Activated B cell treated with CpG ODN at 0.5 μM for 24 hours (primary cell): ENCODE measurements at regions of chr1 and their contacts with region 1.

Region 1: DNA sequence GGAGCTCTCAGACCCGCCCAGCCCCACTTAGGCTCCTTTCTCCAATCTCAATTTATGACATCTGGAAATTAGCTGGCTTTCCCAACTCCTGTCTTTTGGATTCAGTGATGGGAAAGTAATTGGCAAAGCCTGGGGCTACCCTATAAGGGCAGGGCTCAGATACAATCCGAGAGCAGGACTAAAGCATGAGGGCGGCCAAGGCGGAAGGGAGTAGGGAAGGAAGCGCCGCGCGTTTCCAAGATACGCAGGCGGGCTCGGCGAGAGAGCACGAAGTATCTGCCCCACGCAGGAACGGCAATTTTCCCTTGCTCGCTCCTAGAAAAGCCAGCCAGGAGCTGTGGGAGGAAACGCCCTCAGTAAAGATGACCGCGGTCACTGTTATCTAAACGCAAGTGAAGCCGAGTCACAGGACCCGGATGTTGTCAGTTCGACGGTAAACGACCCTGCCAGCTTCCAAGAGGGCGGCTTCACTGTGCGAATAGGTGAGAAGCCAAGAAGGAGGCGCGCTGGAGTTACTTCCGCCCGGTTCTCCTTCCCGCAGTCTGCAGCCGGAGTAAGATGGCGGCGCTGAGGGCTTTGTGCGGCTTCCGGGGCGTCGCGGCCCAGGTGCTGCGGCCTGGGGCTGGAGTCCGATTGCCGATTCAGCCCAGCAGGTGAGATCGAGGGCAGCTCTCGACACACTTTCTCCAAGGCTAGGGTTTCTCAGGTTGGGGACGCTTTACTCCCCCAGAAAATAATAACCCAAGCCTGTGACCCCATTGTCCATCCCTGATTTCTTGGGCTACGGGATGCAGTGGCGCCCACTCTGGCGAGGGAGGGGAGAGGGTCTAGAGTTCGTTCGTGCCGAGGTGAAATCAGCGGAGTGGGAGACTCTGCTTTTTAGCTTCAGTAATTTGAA is at the start of gene NDUFS2:
- DNase-seq: peak; percentile 82
- ATAC-seq: peak; percentile 99
- H3K4me3 Mint-ChIP-seq: peak within 1 kb of the TSS; percentile 94
- H3K27ac Mint-ChIP-seq: peak within 1 kb of the TSS; percentile 94
- H3K4me1 Mint-ChIP-seq: peaks cover 38% of the 10 kb centered on the region
- H3K27me3 Mint-ChIP-seq: no peaks in the 10 kb centered on the region
- CTCF ChIP-seq: no peak
- total RNA-seq, gene NDUFS2: 69.1 and 73.9 TPM in 2 replicates

Region 2: DNA sequence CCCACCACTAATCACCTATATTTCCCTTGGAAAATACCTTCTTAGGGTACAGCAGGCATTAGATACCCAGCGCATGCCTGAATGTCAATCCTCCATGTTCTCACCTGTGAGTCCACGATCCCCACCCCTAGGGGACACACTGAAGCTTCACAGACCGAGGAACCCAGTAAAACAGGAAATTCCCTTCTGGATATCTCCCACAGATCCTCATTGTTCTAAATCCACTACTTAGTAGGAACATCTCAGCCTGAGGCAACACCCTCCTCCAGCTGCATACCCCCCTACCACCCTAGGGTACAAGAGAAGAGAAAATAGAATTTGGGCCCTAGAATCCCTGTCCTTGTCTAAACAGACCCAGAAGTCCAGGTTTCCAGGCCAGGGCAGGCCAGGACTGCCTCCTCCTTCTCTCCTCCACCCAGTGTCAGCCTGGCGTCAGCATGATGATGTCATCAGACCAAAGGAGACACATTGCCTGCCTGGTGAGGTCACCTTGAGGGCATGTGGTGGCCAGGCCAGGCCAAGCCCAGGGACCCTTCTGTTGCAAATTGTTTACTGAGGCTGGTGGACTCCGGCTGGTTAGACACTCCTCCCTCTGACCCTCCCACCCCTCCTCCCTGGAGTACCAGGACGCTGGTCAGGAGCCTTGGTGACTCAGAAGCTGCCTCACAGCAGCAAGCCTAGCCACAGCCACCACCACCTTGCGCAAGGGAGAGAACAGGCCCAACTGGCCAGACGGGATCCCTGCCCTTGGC is 118.9 kb before region 1 on chr1:
- CTCF ChIA-PET with region 1: no interaction called
- POLR2A ChIA-PET with region 1: no interaction called
- intact Hi-C with region 1: no loop called
- DNase-seq: no peak
- ATAC-seq: no peak
- H3K4me3 Mint-ChIP-seq: no peak overlapping the region
- H3K27ac Mint-ChIP-seq: no peak overlapping the region
- H3K4me1 Mint-ChIP-seq: no peaks in the 10 kb centered on the region
- H3K27me3 Mint-ChIP-seq: peaks cover 4% of the 10 kb centered on the region
- CTCF ChIP-seq: no peak

Region 3: GRCh38 chr1:161153679-161154426 is 48.2 kb before region 1 on chr1 and contains the start of gene UFC1:
- CTCF ChIA-PET with region 1: no interaction called
- POLR2A ChIA-PET with region 1: interaction called, 13 read pairs
- intact Hi-C with region 1: loop called (anchors 1 kb)
- DNase-seq: peak; percentile 66
- ATAC-seq: peak; percentile 94
- H3K4me3 Mint-ChIP-seq: peak within 1 kb of the TSS; percentile 99
- H3K27ac Mint-ChIP-seq: peak within 1 kb of the TSS; percentile 100
- H3K4me1 Mint-ChIP-seq: peaks cover 21% of the 10 kb centered on the region
- H3K27me3 Mint-ChIP-seq: no peaks in the 10 kb centered on the region
- CTCF ChIP-seq: no peak
- total RNA-seq, gene UFC1: 107 and 127 TPM in 2 replicates

Region 4: GRCh38 chr1:161165742-161166668 is 36.1 kb before region 1 on chr1 and contains the start of gene PPOX:
- CTCF ChIA-PET with region 1: interaction called, 21 read pairs
- POLR2A ChIA-PET with region 1: interaction called, 30 read pairs
- intact Hi-C with region 1: loop called (anchors 1 kb)
- DNase-seq: peak; percentile 82
- ATAC-seq: peak; percentile 94
- H3K4me3 Mint-ChIP-seq: peak within 1 kb of the TSS; percentile 88
- H3K27ac Mint-ChIP-seq: peak within 1 kb of the TSS; percentile 98
- H3K4me1 Mint-ChIP-seq: peaks cover 48% of the 10 kb centered on the region
- H3K27me3 Mint-ChIP-seq: no peaks in the 10 kb centered on the region
- CTCF ChIP-seq: no peak
- total RNA-seq, gene PPOX: 31.5 and 40.7 TPM in 2 replicates

Region 5: GRCh38 chr1:161185282-161185682 is 16.8 kb before region 1 on chr1:
- CTCF ChIA-PET with region 1: interaction called, 6 read pairs
- POLR2A ChIA-PET with region 1: interaction called, 40 read pairs
- intact Hi-C with region 1: loop called (anchors 1 kb)
- DNase-seq: peak; percentile 41
- ATAC-seq: peak; percentile 66
- H3K4me3 Mint-ChIP-seq: peak overlapping the region; percentile 77
- H3K27ac Mint-ChIP-seq: peak overlapping the region; percentile 93
- H3K4me1 Mint-ChIP-seq: peaks cover 85% of the 10 kb centered on the region
- H3K27me3 Mint-ChIP-seq: no peaks in the 10 kb centered on the region
- CTCF ChIP-seq: no peak

Region 6: DNA sequence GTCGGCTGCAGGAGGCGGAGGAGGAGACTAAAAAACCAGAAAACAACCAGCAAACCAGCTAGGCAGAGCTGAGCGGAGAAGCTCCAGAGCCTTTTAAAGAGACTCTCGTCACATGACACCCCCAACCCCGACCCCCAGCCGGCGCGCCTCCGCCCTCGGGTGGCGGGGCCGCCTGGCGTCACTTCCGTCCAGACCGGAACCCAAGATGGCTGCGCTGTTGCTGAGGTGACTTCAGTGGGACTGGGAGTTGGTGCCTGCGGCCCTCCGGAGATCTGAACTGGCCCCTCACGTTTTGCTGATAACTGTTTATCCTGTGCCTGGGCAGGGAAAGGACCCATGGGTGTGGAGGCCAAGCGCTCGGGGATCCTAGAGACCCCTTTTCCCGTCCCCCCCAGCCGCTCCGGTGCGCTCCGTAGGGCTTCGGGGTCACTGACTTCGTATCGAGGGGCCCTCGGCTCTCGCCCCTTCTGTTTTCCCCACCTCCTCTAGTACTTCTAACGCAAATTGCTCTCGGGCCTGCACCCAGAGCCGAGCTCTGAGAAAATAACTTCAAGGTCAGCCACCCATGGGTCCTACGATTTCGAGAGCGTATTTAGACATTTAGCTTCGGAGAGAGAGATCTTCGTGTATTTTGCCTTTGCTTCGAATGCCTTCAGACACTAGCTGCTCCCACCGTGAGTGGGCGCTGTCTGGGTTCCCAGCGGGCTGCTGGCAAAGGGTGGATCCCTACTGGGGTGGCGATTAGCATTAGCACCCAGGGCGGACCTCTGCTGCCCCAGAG is 112.3 kb after region 1 on chr1 and contains the start of gene SDHC:
- CTCF ChIA-PET with region 1: no interaction called
- POLR2A ChIA-PET with region 1: interaction called, 10 read pairs
- intact Hi-C with region 1: loop called (anchors 1 kb)
- DNase-seq: peak; percentile 83
- ATAC-seq: peak; percentile 97
- H3K4me3 Mint-ChIP-seq: peak within 1 kb of the TSS; percentile 98
- H3K27ac Mint-ChIP-seq: peak within 1 kb of the TSS; percentile 98
- H3K4me1 Mint-ChIP-seq: peaks cover 21% of the 10 kb centered on the region
- H3K27me3 Mint-ChIP-seq: no peaks in the 10 kb centered on the region
- CTCF ChIP-seq: no peak
- total RNA-seq, gene SDHC: 160 and 179 TPM in 2 replicates

Region 7: GRCh38 chr1:161389691-161390558 is 187.8 kb after region 1 on chr1:
- CTCF ChIA-PET with region 1: no interaction called
- POLR2A ChIA-PET with region 1: interaction called, 15 read pairs
- intact Hi-C with region 1: no loop called
- DNase-seq: peak; percentile 90
- ATAC-seq: peak; percentile 95
- H3K4me3 Mint-ChIP-seq: peak overlapping the region; percentile 89
- H3K27ac Mint-ChIP-seq: peak overlapping the region; percentile 90
- H3K4me1 Mint-ChIP-seq: peaks cover 17% of the 10 kb centered on the region
- H3K27me3 Mint-ChIP-seq: no peaks in the 10 kb centered on the region
- CTCF ChIP-seq: no peak